PC-3 (cell line): ENCODE measurements at regions of chr7 and their contacts with region 1.

Region 1: GRCh38 chr7:77425101-77426051 is 9.2 kb upstream of the GSAP start:
- DNase-seq: peak; percentile 91
- ATAC-seq: peak; percentile 93
- H3K4me3 ChIP-seq: peak overlapping the region; percentile 60
- H3K27ac ChIP-seq: peak overlapping the region; percentile 94
- H3K4me1 ChIP-seq: peaks cover 60% of the 10 kb centered on the region
- H3K27me3 ChIP-seq: no peaks in the 10 kb centered on the region
- CTCF ChIP-seq: no peak

Region 2: GRCh38 chr7:77331938-77332695 is 93.3 kb before region 1 on chr7:
- CTCF ChIA-PET with region 1: interaction called, 3 read pairs
- POLR2A ChIA-PET with region 1: interaction called, 13 read pairs
- intact Hi-C with region 1: no loop called
- DNase-seq: peak; percentile 90
- ATAC-seq: peak; percentile 74
- H3K4me3 ChIP-seq: no peak overlapping the region
- H3K27ac ChIP-seq: no peak overlapping the region
- H3K4me1 ChIP-seq: peaks cover 45% of the 10 kb centered on the region
- H3K27me3 ChIP-seq: no peaks in the 10 kb centered on the region
- CTCF ChIP-seq: peak; percentile 74

Region 3: DNA sequence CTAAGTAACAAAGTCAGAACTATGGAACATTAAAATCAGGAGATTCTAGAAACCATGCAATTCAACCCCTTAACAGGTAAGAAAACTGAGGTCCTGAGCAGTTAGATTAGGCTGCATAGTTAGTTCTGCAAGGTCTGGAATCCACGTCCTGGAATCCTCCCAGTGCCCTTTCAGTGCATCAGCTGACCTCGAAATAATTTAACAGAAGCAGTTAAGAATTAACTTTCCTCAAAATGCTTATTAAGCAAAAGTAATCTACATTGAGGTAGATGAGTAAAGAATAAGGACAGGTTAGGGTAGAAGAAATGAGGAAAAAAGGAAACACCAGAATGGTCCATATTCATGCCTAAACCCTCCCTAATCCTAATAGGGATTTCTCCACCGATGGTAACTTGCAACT is 46.8 kb before region 1 on chr7:
- CTCF ChIA-PET with region 1: interaction called, 17 read pairs
- POLR2A ChIA-PET with region 1: no interaction called
- intact Hi-C with region 1: loop called (anchors 10 kb)
- DNase-seq: no peak
- ATAC-seq: no peak
- H3K4me3 ChIP-seq: no peak overlapping the region
- H3K27ac ChIP-seq: no peak overlapping the region
- H3K4me1 ChIP-seq: no peaks in the 10 kb centered on the region
- H3K27me3 ChIP-seq: no peaks in the 10 kb centered on the region
- CTCF ChIP-seq: no peak

Region 4: GRCh38 chr7:77439572-77439971 is 14.2 kb after region 1 on chr7:
- CTCF ChIA-PET with region 1: no interaction called
- POLR2A ChIA-PET with region 1: interaction called, 27 read pairs
- intact Hi-C with region 1: no loop called
- DNase-seq: peak; percentile 65
- ATAC-seq: peak; percentile 70
- H3K4me3 ChIP-seq: no peak overlapping the region
- H3K27ac ChIP-seq: no peak overlapping the region
- H3K4me1 ChIP-seq: peaks cover 42% of the 10 kb centered on the region
- H3K27me3 ChIP-seq: no peaks in the 10 kb centered on the region
- CTCF ChIP-seq: peak; percentile 70

Region 5: GRCh38 chr7:77550586-77550985 is 125.2 kb after region 1 on chr7:
- CTCF ChIA-PET with region 1: no interaction called
- POLR2A ChIA-PET with region 1: interaction called, 10 read pairs
- intact Hi-C with region 1: no loop called
- DNase-seq: no peak
- ATAC-seq: no peak
- H3K4me3 ChIP-seq: no peak overlapping the region
- H3K27ac ChIP-seq: no peak overlapping the region
- H3K4me1 ChIP-seq: no peaks in the 10 kb centered on the region
- H3K27me3 ChIP-seq: no peaks in the 10 kb centered on the region
- CTCF ChIP-seq: no peak